A549 (cell line): ENCODE measurements at regions of chr10 and their contacts with region 1.

Region 1: GRCh38 chr10:63720072-63720537 is 198.9 kb downstream of the REEP3 start:
- DNase-seq: peak in 1 of 2 experiments; percentile 57
- ATAC-seq: peak in 1 of 2 experiments; percentile 62; a peak in 3 of 6 replicates
- H3K4me3 ChIP-seq: no peak overlapping the region
- H3K27ac ChIP-seq: peak overlapping the region in 1 of 2 experiments; percentile 66; a peak in 1 of 6 replicates
- H3K4me1 ChIP-seq: peaks cover 23% of the 10 kb centered on the region
- CTCF ChIP-seq: peak; percentile 99
- EP300 ChIP-seq: no peak
- POLR2A ChIP-seq: no peak
- RAD21 ChIP-seq: peak; percentile 96 to 97

Region 2: DNA sequence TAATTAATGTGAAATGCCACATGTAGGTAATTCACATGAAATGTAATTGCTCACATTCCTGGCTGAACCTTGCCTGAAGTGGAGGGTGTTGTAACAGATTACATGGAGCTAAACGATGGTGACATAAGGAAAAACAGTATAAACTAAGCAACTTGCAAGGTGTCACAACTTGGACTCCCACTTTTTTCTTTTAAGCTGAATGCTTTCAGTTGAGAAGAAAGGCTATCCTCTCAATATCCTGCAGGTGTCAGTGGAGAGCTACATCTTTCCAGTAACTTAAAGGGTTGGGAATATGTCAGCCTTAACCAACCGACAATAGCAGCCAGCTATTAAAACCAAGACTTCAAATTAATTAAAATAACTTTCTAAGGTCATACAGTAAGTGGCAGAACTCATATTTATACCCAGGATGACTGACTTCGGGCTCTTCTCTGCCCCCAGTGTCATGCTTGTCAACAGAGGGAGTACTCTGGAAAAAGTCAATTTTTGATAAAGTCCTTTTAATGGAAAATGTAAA is 553.3 kb before region 1 on chr10:
- CTCF ChIA-PET with region 1: interaction called, 143 read pairs
- POLR2A ChIA-PET with region 1: no interaction called
- DNase-seq: peak; percentile 31 to 84
- ATAC-seq: peak; percentile 87 to 91
- H3K4me3 ChIP-seq: no peak overlapping the region
- H3K27ac ChIP-seq: no peak overlapping the region
- H3K4me1 ChIP-seq: no peaks in the 10 kb centered on the region
- CTCF ChIP-seq: peak; percentile 82
- EP300 ChIP-seq: no peak
- POLR2A ChIP-seq: no peak
- RAD21 ChIP-seq: peak; percentile 79 to 82

Region 3: DNA sequence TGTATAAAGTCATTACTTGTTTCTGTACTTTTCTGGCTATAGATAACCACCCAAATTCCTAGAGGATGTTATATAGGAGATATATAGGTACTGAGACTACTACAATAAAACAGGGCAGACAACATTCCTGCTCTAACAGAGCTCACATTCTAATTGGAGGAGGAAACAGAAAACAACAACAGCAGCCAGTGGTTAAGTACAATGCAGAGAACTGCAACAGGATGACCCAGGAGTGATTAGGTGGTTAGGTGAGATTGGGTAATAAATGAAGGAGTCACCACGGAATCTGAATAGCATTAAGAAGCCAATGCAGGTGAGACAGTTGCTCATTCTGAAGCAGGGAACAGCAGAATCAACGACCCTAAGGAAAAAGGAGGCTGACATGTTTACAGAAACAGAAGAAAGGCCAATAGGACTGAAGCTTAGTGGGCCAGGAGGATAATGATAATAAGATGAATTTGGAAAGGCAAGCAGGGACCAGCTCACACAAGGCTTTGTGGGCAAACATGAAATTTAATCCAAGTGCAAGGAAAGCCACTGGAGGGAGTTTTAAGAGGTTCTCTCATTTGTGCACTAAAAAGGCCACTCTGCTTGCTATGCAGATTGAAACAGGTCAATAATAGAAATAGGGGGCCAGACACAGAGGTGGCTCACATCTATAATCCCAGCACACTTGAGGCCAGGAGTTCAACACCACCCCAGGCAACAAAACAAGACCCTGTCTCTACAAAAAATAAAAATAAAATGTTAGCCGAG is 215.8 kb before region 1 on chr10:
- CTCF ChIA-PET with region 1: interaction called, 10 read pairs
- POLR2A ChIA-PET with region 1: no interaction called
- DNase-seq: no peak
- ATAC-seq: peak; percentile 30 to 51; a peak in 4 of 6 replicates
- H3K4me3 ChIP-seq: no peak overlapping the region
- H3K27ac ChIP-seq: no peak overlapping the region
- H3K4me1 ChIP-seq: peaks cover 18% of the 10 kb centered on the region; the same call in 2 of the 3 replicates
- CTCF ChIP-seq: no peak
- EP300 ChIP-seq: no peak
- POLR2A ChIP-seq: no peak
- RAD21 ChIP-seq: no peak

Region 4: DNA sequence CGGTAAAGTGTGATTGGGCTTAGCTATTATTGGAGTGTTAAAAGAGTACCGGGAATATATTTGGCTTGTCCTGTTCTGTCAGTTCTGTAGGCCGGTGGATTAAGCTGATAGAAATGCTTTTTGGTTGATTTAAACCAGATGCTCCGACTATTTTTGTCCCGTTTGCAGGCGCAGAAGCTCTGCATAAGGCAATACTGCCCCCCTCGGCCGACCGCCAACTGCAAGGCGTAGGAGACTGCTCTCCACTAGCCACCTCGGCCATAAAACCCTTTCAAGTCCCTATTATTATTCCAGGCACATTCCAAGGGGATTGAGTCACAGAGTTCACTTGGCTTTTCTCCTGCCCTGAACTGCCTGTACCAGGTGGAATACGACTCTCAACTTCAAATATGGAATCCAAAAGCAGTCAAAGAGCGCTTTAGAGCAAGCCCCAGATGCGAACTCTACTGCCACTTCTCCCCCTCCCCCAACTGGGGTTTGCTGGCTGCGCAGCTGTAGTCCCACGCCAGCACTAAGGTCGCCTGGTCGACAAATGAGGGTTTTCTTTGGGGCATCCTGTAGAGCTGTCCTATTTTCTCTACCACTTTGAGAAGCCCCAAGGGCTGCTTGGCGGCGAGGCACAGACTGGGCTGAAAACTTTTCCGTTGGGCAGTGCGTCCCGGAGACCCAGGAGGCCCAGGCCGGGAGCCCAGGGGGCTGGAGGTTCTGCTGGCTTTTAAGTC is 90.6 kb before region 1 on chr10:
- CTCF ChIA-PET with region 1: interaction called, 153 read pairs
- POLR2A ChIA-PET with region 1: interaction called, 17 read pairs
- DNase-seq: peak; percentile 86 to 97
- ATAC-seq: peak; percentile 70 to 86
- H3K4me3 ChIP-seq: peak overlapping the region; percentile 70
- H3K27ac ChIP-seq: peak overlapping the region; percentile 95 to 99
- H3K4me1 ChIP-seq: peaks cover 24% of the 10 kb centered on the region
- CTCF ChIP-seq: peak; percentile 89
- EP300 ChIP-seq: peak in 1 of 2 experiments; percentile 18; a peak in 1 of 5 replicates
- POLR2A ChIP-seq: no peak
- RAD21 ChIP-seq: peak; percentile 93 to 94

Region 5: GRCh38 chr10:63675171-63675570 is 44.9 kb before region 1 on chr10:
- CTCF ChIA-PET with region 1: interaction called, 12 read pairs
- POLR2A ChIA-PET with region 1: no interaction called
- DNase-seq: no peak
- ATAC-seq: no peak
- H3K4me3 ChIP-seq: no peak overlapping the region
- H3K27ac ChIP-seq: no peak overlapping the region
- H3K4me1 ChIP-seq: no peaks in the 10 kb centered on the region
- CTCF ChIP-seq: no peak
- EP300 ChIP-seq: no peak
- POLR2A ChIP-seq: no peak
- RAD21 ChIP-seq: no peak

Region 6: DNA sequence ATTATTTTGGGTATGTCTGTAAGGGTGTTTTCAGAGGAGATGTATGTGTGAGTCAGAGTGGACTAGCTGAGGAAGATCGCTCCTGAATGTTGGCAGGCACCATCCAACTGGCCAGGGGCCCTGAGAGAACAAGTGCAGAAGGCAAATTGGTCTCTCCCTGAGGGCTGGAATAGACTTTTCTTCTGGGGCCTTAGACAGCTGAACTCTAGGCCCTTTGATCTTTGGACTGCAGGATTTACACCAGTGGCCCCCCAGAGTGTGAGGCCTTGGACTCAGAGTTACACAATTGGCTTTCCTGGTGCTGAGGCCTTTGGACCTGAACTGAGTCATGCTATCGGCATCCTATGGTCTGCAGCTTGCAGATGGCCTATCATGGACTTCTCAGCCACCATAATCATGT is 18.3 kb after region 1 on chr10:
- CTCF ChIA-PET with region 1: interaction called, 20 read pairs
- POLR2A ChIA-PET with region 1: no interaction called
- DNase-seq: peak; percentile 24 to 69
- ATAC-seq: peak; percentile 95 to 99
- H3K4me3 ChIP-seq: no peak overlapping the region
- H3K27ac ChIP-seq: peak overlapping the region; percentile 47 to 58; a peak in 5 of 6 replicates
- H3K4me1 ChIP-seq: peaks cover 22% of the 10 kb centered on the region
- CTCF ChIP-seq: no peak
- EP300 ChIP-seq: peak in 1 of 2 experiments; percentile 27; a peak in 1 of 5 replicates
- POLR2A ChIP-seq: no peak
- RAD21 ChIP-seq: no peak

Region 7: GRCh38 chr10:63773106-63773505 is 53.0 kb after region 1 on chr10:
- CTCF ChIA-PET with region 1: interaction called, 58 read pairs
- POLR2A ChIA-PET with region 1: no interaction called
- DNase-seq: no peak
- ATAC-seq: no peak
- H3K4me3 ChIP-seq: no peak overlapping the region
- H3K27ac ChIP-seq: no peak overlapping the region
- H3K4me1 ChIP-seq: no peaks in the 10 kb centered on the region
- CTCF ChIP-seq: no peak
- EP300 ChIP-seq: no peak
- POLR2A ChIP-seq: no peak
- RAD21 ChIP-seq: no peak